ENCODE measurements at regions of chr16 and their contacts with region 1.

Region 1: GRCh38 chr16:29805378-29806098 is 791 bp upstream of the MAZ start:
- DNase-seq: peak; percentile 99
- ATAC-seq: peak; percentile 69
- H3K4me3 ChIP-seq: peak overlapping the region; percentile 63 to 95 (median 89)
- H3K4me3 Mint-ChIP-seq: peak overlapping the region; percentile 98
- H3K27ac ChIP-seq: peak overlapping the region; percentile 87 to 91
- H3K27ac Mint-ChIP-seq: peak overlapping the region; percentile 100
- H3K4me1 ChIP-seq: peaks cover 43 to 48% of the 10 kb centered on the region in 2 donors
- H3K4me1 Mint-ChIP-seq: peaks cover 44% of the 10 kb centered on the region
- H3K27me3 ChIP-seq: no peaks in the 10 kb centered on the region
- H3K27me3 Mint-ChIP-seq: no peaks in the 10 kb centered on the region
- CTCF ChIP-seq: peak; percentile 13

Region 2: GRCh38 chr16:29784901-29785500 is 20.5 kb before region 1 on chr16:
- CTCF ChIA-PET with region 1: interaction called, 17 read pairs
- POLR2A ChIA-PET with region 1: interaction called, 24 read pairs
- intact Hi-C with region 1: loop called (anchors 1 kb)
- DNase-seq: peak; percentile 78
- ATAC-seq: peak; percentile 95
- H3K4me3 ChIP-seq: peak overlapping the region in 4 of 5 experiments; percentile 4 to 49 (median 25)
- H3K4me3 Mint-ChIP-seq: peak overlapping the region; percentile 81
- H3K27ac ChIP-seq: no peak overlapping the region
- H3K27ac Mint-ChIP-seq: peak overlapping the region; percentile 50
- H3K4me1 ChIP-seq: peaks cover 13 to 23% of the 10 kb centered on the region in 2 donors
- H3K4me1 Mint-ChIP-seq: peaks cover 15% of the 10 kb centered on the region
- H3K27me3 ChIP-seq: no peaks in the 10 kb centered on the region
- H3K27me3 Mint-ChIP-seq: no peaks in the 10 kb centered on the region
- CTCF ChIP-seq: peak; percentile 81

Region 3: DNA sequence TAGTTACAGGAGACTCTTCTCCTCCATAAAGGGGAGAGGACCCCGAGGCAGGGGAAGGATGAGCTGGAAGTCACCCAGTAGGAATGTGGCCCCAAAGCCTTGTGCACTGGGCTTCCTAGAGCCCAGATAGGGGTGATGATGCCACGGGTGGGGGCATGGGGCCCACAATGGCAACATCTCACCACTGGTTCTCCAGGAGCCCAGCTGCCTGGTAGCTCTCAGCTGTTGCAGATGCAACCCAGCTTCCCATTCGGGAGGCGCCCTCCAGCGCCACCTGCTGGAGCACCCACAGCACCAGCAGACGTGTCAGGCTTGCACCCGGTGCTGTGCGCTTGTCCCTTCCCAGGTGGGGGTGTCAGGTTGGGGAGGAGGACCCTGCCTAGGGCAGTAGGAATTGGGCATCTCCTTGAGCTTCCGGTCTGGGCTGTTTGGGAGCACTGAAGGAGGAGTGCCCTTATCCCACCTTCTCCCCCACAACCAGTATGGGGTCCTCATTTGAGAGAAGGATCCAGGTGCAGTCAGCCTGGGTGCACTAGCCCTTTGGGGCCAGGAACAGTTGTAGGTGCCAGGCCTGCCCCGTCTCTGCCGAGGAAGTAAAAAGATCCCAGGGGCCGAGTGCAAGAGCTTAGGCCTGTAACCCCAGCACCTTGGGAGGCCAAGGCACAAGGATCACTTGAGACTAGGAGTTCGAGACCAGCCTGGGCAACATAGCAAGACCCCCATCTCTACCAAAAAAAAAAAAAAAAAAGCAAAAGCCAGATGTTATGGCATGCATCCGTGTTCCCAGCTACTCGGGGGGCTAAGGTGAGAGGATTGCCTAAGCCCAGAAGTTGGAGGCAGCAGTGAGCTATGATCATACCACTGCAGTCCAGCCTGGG is 43.1 kb after region 1 on chr16:
- CTCF ChIA-PET with region 1: interaction called, 48 read pairs
- POLR2A ChIA-PET with region 1: interaction called, 10 read pairs
- intact Hi-C with region 1: loop called (anchors 1 kb)
- DNase-seq: peak; percentile 75
- ATAC-seq: peak; percentile 79
- H3K4me3 ChIP-seq: no peak overlapping the region
- H3K4me3 Mint-ChIP-seq: no peak overlapping the region
- H3K27ac ChIP-seq: no peak overlapping the region
- H3K27ac Mint-ChIP-seq: no peak overlapping the region
- H3K4me1 ChIP-seq: no peaks in the 10 kb centered on the region
- H3K4me1 Mint-ChIP-seq: no peaks in the 10 kb centered on the region
- H3K27me3 ChIP-seq: no peaks in the 10 kb centered on the region
- H3K27me3 Mint-ChIP-seq: no peaks in the 10 kb centered on the region
- CTCF ChIP-seq: peak; percentile 78

Region 4: DNA sequence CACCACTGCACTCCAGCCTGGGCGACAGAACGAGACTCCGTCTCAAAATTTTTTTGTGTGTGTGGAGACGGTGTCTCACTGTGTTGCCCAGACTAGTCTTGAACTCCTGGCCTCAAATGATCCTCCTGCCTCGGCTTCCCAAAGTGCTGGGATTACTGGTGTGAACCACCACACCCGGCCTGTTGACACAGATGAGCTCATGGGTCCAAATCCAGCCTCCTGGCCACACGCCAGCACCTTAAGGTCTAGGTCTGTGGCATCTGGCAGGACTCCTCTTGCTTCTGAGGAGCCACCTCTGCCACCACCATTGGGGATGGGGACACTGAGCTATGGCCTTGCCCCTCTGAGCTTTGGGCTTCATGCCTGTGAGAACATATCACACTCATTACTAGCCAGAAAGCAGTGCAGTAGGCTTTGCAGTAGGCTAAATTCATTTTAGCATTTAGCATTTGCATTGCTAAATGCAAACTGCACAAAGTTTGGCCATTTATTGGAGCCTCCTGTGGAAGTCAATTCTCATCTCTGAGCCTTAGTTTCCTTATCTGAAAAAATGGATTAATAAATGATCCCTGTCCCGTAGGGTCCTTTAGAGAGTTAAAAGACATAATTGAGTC is 63.0 kb after region 1 on chr16:
- CTCF ChIA-PET with region 1: no interaction called
- POLR2A ChIA-PET with region 1: no interaction called
- intact Hi-C with region 1: no loop called
- DNase-seq: no peak
- ATAC-seq: no peak
- H3K4me3 ChIP-seq: no peak overlapping the region
- H3K4me3 Mint-ChIP-seq: no peak overlapping the region
- H3K27ac ChIP-seq: no peak overlapping the region
- H3K27ac Mint-ChIP-seq: no peak overlapping the region
- H3K4me1 ChIP-seq: peaks cover 0 to 4% of the 10 kb centered on the region in 2 donors
- H3K4me1 Mint-ChIP-seq: peaks cover 1% of the 10 kb centered on the region
- H3K27me3 ChIP-seq: no peaks in the 10 kb centered on the region
- H3K27me3 Mint-ChIP-seq: no peaks in the 10 kb centered on the region
- CTCF ChIP-seq: no peak

Region 5: GRCh38 chr16:30005341-30006094 is 200.0 kb after region 1 on chr16:
- CTCF ChIA-PET with region 1: interaction called, 7 read pairs
- POLR2A ChIA-PET with region 1: interaction called, 9 read pairs
- intact Hi-C with region 1: loop called (anchors 1 kb)
- DNase-seq: peak; percentile 62
- ATAC-seq: peak; percentile 74
- H3K4me3 ChIP-seq: no peak overlapping the region
- H3K4me3 Mint-ChIP-seq: no peak overlapping the region
- H3K27ac ChIP-seq: no peak overlapping the region
- H3K27ac Mint-ChIP-seq: no peak overlapping the region
- H3K4me1 ChIP-seq: peaks cover 10 to 19% of the 10 kb centered on the region in 2 donors
- H3K4me1 Mint-ChIP-seq: peaks cover 10% of the 10 kb centered on the region
- H3K27me3 ChIP-seq: peaks cover 0 to 14% (median 4%) of the 10 kb centered on the region in 4 experiments
- H3K27me3 Mint-ChIP-seq: peaks cover 12% of the 10 kb centered on the region
- CTCF ChIP-seq: peak; percentile 80

Measured in B cell (primary cell).